Gastrocnemius medialis (tissue), 4 donors: ENCODE measurements at regions of chr1 and their contacts with region 1.

Region 1: DNA sequence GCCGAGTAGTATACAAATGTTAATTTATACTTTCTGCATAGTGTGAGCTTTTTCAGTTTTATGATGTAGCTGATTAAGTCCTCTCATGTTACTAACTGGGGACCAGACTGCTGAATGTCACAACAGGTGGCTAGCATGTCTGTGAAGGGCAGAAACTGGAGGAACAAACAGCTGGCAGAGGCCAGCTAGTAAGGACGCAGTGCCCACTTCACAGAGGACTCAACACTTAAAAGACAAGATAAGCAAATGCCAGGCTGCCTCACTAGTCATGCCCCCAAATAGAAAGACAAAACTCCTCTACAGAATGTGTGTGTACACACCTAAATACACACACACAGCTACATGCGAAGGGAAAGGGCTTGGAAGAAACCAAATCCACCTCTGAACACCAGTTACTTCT is 73.8 kb upstream of the ZNF678 start:
- DNase-seq: no peak
- ATAC-seq: peak; percentile 33 to 55
- H3K4me3 ChIP-seq: no peak overlapping the region
- H3K27ac ChIP-seq: no peak overlapping the region
- H3K4me1 ChIP-seq: peaks cover 0 to 6% of the 10 kb centered on the region in 2 donors
- H3K27me3 ChIP-seq: no peaks in the 10 kb centered on the region
- CTCF ChIP-seq: no peak
- POLR2A ChIP-seq: no peak

Region 2: GRCh38 chr1:227459326-227459841 is 30.2 kb before region 1 on chr1:
- in situ Hi-C with region 1: no loop called
- intact Hi-C with region 1: no loop called
- DNase-seq: no peak
- ATAC-seq: no peak
- H3K4me3 ChIP-seq: no peak overlapping the region
- H3K27ac ChIP-seq: no peak overlapping the region
- H3K4me1 ChIP-seq: no peaks in the 10 kb centered on the region
- H3K27me3 ChIP-seq: no peaks in the 10 kb centered on the region
- CTCF ChIP-seq: no peak
- POLR2A ChIP-seq: no peak

Region 3: DNA sequence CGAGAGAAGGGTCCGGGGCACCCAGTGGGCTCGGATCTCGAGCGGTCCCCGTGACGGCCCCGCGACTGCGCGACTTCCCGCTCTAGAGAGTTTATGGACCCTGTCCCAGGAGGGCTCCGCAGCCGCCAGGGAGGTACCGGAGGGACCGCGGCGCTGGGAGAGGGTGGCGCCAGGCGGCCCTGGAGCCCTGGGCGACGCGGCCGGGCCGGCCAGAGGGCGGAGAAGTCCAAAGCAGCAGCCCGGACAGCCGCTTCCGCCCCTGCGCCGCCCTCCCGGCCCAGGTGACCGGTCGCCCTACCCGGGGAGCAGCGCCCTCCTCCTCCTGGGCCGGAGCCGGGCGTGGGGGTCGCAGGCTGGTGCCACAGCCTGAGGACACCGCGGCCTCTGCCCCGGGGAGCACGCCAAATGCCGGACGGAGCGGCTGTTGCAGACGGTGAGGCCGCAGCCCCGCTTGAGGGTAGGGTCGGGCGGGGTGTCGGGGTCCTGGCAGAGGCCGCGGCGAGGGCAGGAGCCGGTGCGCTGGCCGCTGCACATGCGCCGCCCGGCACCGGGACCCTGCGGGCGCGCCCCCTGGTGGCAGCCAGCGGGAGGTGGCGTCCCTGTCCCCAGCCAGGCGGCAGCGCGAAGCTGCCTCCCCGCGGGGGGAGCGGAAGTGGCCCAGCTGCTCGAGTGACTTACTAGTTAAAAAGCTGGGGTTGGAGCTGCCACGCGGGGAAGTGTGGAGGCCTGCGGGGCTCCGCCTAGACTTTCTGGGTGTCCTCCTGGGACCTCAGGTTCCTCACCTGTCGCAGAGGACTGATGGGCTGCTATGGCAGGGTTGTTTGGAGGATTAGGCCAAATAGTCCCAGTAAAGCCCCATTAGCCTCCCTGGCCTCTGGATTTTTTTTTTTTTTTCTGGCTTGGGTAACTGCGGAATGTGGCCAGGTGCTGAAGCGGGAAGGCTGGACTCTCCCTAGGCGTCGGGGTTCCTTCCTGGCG is 52.9 kb after region 1 on chr1:
- in situ Hi-C with region 1: loop called in 1 of 4 experiments (anchors 10 kb)
- intact Hi-C with region 1: loop called (anchors 1 kb)
- DNase-seq: peak; percentile 68 to 84
- ATAC-seq: peak; percentile 92 to 93
- H3K4me3 ChIP-seq: peak overlapping the region; percentile 75 to 91 (median 88)
- H3K27ac ChIP-seq: peak overlapping the region; percentile 82 to 94 (median 88)
- H3K4me1 ChIP-seq: peaks cover 5 to 14% of the 10 kb centered on the region in 2 donors
- H3K27me3 ChIP-seq: no peaks in the 10 kb centered on the region
- CTCF ChIP-seq: peak; percentile 90 to 99 (median 97)
- POLR2A ChIP-seq: peak in 1 of 2 donors; percentile 46

Region 4: GRCh38 chr1:227712648-227713047 is 223.1 kb after region 1 on chr1:
- in situ Hi-C with region 1: loop called in 2 of 4 experiments (anchors 25 kb)
- intact Hi-C with region 1: no loop called
- DNase-seq: no peak
- ATAC-seq: no peak
- H3K4me3 ChIP-seq: no peak overlapping the region
- H3K27ac ChIP-seq: no peak overlapping the region
- H3K4me1 ChIP-seq: no peaks in the 10 kb centered on the region
- H3K27me3 ChIP-seq: no peaks in the 10 kb centered on the region
- CTCF ChIP-seq: no peak
- POLR2A ChIP-seq: no peak

Region 5: DNA sequence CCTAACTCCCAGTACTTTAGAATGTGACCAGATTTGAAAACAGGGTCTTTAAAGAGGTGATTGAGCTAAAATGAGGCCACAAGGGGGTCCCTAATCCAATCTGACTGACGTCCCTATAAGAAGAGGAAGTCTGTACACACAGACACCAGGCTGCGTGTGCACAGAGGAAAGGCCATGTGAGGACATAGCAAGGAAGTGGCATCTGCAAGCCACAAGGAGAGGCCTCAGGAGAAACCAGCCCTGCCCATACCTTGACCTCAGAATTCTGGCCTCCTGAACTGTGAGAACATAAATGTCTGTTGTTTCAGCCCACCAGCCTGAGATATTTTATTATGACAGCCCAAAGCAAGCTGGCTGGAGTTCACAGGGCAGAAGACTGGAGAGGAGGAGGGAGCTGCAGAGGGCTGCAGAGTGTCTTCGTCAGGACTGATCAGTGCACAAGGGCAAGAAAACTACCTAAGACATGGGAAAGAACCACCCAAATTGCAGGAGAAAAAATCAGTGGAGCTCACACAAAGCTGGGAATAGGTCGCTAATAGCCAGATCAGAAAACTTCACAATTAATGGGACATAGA is 472.2 kb after region 1 on chr1:
- in situ Hi-C with region 1: loop called (anchors 5 to 25 kb)
- intact Hi-C with region 1: no loop called
- DNase-seq: no peak
- ATAC-seq: no peak
- H3K4me3 ChIP-seq: no peak overlapping the region
- H3K27ac ChIP-seq: no peak overlapping the region
- H3K4me1 ChIP-seq: no peaks in the 10 kb centered on the region
- H3K27me3 ChIP-seq: peaks cover 0 to under 1% (median 0%) of the 10 kb centered on the region in 3 donors
- CTCF ChIP-seq: no peak
- POLR2A ChIP-seq: no peak